Motor neuron (in vitro differentiated cells): ENCODE measurements at regions of chr1 and their contacts with region 1.

Region 1: GRCh38 chr1:205485338-205486228 is 18.9 kb upstream of the CDK18 start:
- ATAC-seq: peak; percentile 73 to 95 (median 90)
- H3K4me3 ChIP-seq: no peak overlapping the region
- H3K27ac ChIP-seq: no peak overlapping the region
- H3K4me1 ChIP-seq: peaks cover 17 to 20% of the 10 kb centered on the region in 2 donors

Region 2: DNA sequence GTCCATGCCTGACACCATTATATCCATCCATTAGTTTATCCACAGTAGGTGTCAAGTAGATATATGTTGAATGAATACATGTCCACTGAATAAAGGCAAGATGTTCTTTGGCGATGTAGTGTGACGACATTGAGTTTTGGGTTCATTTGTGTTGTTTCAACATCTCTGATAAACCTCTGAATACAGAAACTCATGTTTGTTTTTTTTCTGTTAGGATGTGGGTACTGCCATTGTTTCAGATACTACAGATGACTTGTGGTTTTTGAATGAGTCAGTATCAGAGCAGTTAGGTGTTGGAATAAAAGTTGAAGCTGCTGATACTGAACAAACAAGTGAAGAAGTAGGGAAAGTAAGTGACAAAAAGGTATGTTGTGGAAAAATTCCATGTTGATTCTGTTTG is 941.3 kb before region 1 on chr1:
- in situ Hi-C with region 1: no loop called
- ATAC-seq: no peak
- H3K4me3 ChIP-seq: no peak overlapping the region
- H3K27ac ChIP-seq: no peak overlapping the region
- H3K4me1 ChIP-seq: peaks cover 4 to 6% of the 10 kb centered on the region in 2 donors

Region 3: GRCh38 chr1:205335643-205336091 is 149.9 kb before region 1 on chr1:
- in situ Hi-C with region 1: loop called in 1 of 9 experiments (anchors 25 kb)
- ATAC-seq: peak; percentile 89 to 100 (median 94)
- H3K4me3 ChIP-seq: no peak overlapping the region
- H3K27ac ChIP-seq: no peak overlapping the region
- H3K4me1 ChIP-seq: peaks cover 0 to 4% of the 10 kb centered on the region in 2 donors

Region 4: DNA sequence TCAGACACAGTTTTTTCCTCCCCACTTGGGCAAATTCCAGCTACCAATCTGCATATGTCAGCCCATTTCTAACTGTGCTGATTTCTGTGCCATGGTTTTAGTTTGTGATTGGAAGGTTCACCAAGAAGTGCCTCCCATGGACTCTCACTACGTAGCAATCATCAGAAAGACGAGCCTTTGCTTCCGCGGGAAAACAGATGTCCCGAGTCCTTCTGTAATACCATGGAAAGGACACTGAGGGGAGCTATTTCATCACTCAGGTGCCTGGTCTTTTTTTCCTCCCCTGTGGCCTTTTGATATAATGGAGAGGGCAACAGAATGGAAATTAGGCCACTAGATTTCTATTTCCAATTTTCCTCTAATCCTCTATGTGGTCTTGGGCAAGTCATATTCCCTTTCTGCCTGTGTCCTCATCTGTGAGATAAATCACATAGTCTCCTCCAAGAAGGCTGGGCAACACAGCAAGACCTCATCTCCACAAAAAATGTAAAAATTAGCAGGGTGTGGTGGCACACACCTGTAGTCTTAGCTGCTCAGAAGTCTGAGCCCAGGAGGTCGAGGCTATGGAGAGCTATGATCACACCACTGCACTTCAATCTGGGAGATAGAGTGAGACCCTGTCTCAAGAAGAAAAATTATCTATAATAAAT is 88.5 kb before region 1 on chr1:
- in situ Hi-C with region 1: loop called in 3 of 9 experiments (anchors 5 to 25 kb)
- ATAC-seq: peak; percentile 60 to 99 (median 80)
- H3K4me3 ChIP-seq: no peak overlapping the region
- H3K27ac ChIP-seq: no peak overlapping the region
- H3K4me1 ChIP-seq: peaks cover 0 to 5% of the 10 kb centered on the region in 2 donors

Region 5: DNA sequence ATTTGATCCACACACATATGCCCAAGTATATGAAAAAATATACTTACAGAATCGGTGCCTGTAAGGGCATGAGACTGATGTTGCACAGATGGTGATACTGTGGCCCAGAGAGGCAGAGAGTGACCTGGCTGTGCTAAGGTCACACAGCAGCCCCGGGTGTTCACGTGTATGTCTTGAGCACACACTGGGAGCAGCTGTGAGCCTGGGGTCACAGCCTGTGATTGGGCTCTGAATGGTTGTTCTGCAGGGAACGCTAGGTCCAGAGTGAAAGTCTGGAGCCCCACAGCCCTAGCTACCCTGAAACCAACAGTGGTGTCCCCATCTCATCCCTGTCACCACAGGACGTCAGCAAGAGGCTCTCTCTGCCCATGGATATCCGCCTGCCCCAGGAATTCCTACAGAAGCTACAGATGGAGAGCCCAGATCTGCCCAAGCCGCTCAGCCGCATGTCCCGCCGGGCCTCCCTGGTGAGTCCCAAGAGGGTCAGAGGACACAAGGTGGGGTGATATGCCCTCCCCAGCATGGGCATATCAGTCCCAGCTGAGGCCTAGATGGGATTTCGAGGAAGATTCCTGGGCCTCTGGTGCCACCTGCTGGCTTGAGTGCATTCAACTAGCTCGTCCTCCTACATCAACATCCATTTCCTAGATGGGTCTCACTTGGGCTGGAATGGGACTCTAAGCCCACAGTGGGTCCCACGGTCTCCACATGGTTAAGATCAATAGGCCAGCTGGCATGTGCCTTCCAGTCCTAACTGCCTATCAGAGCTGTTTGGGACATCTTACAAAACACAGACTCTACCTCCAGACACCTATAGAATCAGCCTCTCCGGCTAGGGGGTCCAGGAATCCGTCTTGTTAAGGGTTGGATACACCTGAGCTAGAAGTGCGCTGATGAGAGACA is 38.6 kb after region 1 on chr1:
- in situ Hi-C with region 1: loop called in 1 of 9 experiments (anchors 5 kb)
- ATAC-seq: peak; percentile 21 to 76 (median 44)
- H3K4me3 ChIP-seq: no peak overlapping the region
- H3K27ac ChIP-seq: no peak overlapping the region
- H3K4me1 ChIP-seq: peaks cover 39 to 58% of the 10 kb centered on the region in 2 donors